ENCODE measurements at regions of chr2 and their contacts with region 1.

Region 1: GRCh38 chr2:170486730-170487129 is 228.4 kb upstream of the SP5 start:
- DNase-seq: no peak
- H3K4me3 ChIP-seq: no peak overlapping the region
- H3K27ac ChIP-seq: no peak overlapping the region
- H3K27me3 ChIP-seq: peaks cover 0 to 1% (median 0%) of the 10 kb centered on the region in 45 donors
- CTCF ChIP-seq: peak in 52 of 56 donors; percentile 17 to 77 (median 50)

Region 2: DNA sequence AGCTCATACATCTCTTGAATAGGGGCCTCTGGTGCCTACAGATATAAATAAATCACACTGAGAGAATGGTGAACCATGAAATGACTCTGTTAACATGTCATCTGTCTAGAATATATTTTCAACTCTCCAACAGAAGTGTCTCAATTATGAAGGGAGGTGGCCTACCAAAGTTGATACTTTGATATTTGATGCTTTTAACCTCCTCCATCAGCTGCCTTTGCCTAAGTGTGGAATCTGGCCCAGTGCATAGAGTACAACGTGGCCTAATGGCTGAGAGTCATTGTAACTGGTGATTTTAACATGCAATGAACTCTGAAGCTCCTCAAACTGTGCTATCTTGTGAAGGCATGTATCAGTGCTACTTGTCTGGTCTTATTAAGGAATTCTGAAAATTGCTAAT is 215.4 kb before region 1 on chr2:
- intact Hi-C with region 1: no loop called
- DNase-seq: no peak
- H3K4me3 ChIP-seq: no peak overlapping the region
- H3K27ac ChIP-seq: no peak overlapping the region
- H3K27me3 ChIP-seq: no peaks in the 10 kb centered on the region
- CTCF ChIP-seq: no peak

Region 3: GRCh38 chr2:170576296-170576695 is 89.6 kb after region 1 on chr2:
- intact Hi-C with region 1: loop called (anchors 5 to 10 kb)
- DNase-seq: no peak
- H3K4me3 ChIP-seq: no peak overlapping the region
- H3K27ac ChIP-seq: no peak overlapping the region
- H3K27me3 ChIP-seq: peaks cover 0 to 4% (median 0%) of the 10 kb centered on the region in 45 donors
- CTCF ChIP-seq: peak in 21 of 56 donors; percentile 10 to 48 (median 29)

Measured in dorsolateral prefrontal cortex (tissue), 120 donors.